ENCODE measurements at regions of chr3 and their contacts with region 1.

Region 1: GRCh38 chr3:129160891-129161859 is at the start of gene ISY1:
- DNase-seq: peak; percentile 96
- H3K4me3 Mint-ChIP-seq: peak within 1 kb of the TSS; percentile 98
- H3K27ac Mint-ChIP-seq: peak within 1 kb of the TSS; percentile 98
- H3K4me1 Mint-ChIP-seq: peaks cover 31% of the 10 kb centered on the region
- H3K27me3 Mint-ChIP-seq: peaks cover 3% of the 10 kb centered on the region
- total RNA-seq, gene ISY1: 73.8 and 83.7 TPM in 2 replicates

Region 2: DNA sequence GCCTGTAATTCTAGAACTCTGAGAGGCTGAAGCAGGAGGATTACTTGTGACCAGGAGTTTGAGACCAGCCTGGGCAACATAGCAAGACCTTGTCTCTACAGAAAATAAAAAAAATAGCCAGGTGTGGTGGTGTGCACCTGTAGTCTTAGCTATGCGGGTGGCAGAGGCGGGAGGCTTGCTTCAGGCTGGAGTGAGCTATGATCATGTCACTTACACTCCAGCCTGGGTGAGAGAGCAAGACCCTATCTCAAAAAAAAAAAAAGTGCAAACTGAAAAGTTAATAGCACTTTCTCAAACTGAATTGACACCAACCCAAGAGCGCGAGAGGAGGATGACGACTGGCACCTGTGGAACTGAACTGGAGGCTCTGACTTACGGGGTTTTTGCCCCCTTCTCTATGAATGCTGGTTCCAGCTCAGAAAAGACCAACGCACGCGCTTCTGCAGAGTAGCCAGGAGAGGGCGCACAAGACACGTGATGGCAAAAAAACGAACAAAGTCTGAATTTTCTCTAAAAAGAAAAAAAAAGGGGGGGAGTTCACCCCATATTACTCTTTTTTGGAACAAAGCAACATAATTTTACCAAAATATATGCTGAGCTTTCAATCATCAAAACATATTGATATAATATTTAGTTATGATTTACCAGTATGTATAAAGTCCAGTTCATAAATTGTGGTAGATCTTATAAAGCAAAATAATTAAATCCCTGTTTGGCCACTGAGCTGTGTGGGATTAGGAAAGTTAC is 191.0 kb before region 1 on chr3:
- intact Hi-C with region 1: loop called (anchors 1 kb)
- DNase-seq: peak; percentile 90
- H3K4me3 Mint-ChIP-seq: no peak overlapping the region
- H3K27ac Mint-ChIP-seq: no peak overlapping the region
- H3K4me1 Mint-ChIP-seq: peaks cover 6% of the 10 kb centered on the region
- H3K27me3 Mint-ChIP-seq: peaks cover 5% of the 10 kb centered on the region

Region 3: DNA sequence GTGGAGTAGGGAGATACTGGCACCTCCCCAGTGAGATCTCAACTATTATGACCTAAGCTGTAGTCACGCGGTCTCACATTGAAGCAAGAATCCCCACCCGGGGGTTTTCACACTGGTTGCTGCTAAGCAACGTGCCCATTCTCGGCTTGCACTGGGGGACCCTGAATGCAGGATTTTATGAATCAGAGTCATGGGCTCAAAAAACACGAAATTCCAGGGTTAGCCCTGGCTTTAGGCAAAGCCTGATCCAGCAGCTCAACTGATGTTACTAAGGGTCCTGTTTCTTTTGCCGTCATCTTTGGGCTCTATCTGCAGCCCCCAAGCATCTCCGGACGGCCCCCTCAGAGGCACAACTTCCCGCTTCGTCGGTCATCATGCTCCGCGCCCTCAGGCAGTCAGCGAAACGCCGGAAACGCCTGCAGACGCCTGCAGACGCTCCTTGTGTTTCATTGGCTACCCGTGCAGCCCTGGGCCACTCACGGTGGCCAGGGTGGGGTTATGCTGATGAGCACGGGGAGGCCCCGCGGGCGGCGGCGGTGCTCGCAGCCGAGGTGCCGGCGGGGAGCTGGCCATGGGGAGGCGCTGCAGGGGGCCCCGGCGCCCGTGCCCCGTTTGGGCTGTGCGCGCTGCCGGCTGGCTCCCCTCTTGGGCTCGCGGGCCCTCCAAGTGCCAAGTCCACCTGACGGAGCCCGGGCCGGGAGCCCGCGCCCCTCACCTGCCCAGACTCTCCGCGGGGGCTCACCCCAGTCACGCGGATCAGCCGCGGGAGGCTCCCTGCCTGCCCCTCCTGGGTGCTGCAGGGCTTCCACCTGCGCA is 134.2 kb before region 1 on chr3:
- intact Hi-C with region 1: loop called (anchors 1 kb)
- DNase-seq: peak; percentile 98
- H3K4me3 Mint-ChIP-seq: peak overlapping the region; percentile 84
- H3K27ac Mint-ChIP-seq: peak overlapping the region; percentile 92
- H3K4me1 Mint-ChIP-seq: peaks cover 11% of the 10 kb centered on the region
- H3K27me3 Mint-ChIP-seq: peaks cover 9% of the 10 kb centered on the region

Region 4: GRCh38 chr3:129052675-129053074 is 108.5 kb before region 1 on chr3:
- intact Hi-C with region 1: loop called (anchors 1 kb)
- DNase-seq: no peak
- H3K4me3 Mint-ChIP-seq: no peak overlapping the region
- H3K27ac Mint-ChIP-seq: no peak overlapping the region
- H3K4me1 Mint-ChIP-seq: peaks cover 9% of the 10 kb centered on the region
- H3K27me3 Mint-ChIP-seq: peaks cover 14% of the 10 kb centered on the region

Region 5: GRCh38 chr3:129173206-129173605 is 12.0 kb after region 1 on chr3:
- intact Hi-C with region 1: loop called (anchors 1 kb)
- DNase-seq: no peak
- H3K4me3 Mint-ChIP-seq: no peak overlapping the region
- H3K27ac Mint-ChIP-seq: no peak overlapping the region
- H3K4me1 Mint-ChIP-seq: peaks cover 29% of the 10 kb centered on the region
- H3K27me3 Mint-ChIP-seq: no peaks in the 10 kb centered on the region

Region 6: DNA sequence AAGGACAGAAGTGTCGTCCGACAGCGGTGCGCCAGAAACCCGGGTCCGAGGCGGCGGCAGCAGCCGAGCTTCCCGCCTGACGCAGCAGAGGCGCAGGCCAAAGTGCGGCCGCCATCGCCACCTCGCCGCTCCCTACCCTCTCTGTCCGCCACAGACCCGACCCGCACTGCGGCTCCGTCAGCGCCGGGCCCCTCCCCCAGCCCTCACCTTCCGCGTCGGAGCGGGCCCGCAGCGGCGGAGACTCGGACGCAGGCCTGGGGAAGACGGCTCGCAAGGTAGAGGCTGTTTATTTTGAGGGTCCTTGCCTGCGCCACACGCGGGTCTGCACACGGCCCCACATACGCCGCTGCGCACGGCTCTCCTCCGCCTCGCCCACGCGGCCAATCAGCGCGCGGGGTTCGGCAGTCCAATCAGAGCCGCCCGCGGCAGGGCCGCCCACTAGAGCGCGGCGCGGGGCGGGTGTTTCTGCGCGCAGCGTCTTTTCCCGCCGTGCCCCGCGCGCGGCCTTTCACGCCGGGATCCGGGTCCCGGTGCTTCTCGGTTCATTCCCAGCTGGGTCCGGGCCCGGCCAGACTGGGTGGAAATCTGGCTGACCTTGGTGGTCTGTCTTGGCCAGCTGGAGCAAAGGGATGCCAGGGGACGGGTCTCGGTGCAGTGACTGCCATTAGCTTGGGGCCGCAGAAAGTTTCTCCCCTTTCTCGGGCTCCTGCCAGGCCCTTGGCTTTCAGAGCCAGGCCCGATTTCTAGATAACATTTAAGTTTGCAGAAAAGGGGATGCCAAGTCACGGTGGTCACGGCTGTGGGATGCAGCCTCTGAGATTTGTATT is 22.6 kb after region 1 on chr3 and contains the start of gene CNBP:
- intact Hi-C with region 1: loop called (anchors 1 kb)
- DNase-seq: peak; percentile 98
- H3K4me3 Mint-ChIP-seq: peak within 1 kb of the TSS; percentile 96
- H3K27ac Mint-ChIP-seq: peak within 1 kb of the TSS; percentile 99
- H3K4me1 Mint-ChIP-seq: peaks cover 33% of the 10 kb centered on the region
- H3K27me3 Mint-ChIP-seq: no peaks in the 10 kb centered on the region
- total RNA-seq, gene CNBP: 422 and 430 TPM in 2 replicates

Region 7: DNA sequence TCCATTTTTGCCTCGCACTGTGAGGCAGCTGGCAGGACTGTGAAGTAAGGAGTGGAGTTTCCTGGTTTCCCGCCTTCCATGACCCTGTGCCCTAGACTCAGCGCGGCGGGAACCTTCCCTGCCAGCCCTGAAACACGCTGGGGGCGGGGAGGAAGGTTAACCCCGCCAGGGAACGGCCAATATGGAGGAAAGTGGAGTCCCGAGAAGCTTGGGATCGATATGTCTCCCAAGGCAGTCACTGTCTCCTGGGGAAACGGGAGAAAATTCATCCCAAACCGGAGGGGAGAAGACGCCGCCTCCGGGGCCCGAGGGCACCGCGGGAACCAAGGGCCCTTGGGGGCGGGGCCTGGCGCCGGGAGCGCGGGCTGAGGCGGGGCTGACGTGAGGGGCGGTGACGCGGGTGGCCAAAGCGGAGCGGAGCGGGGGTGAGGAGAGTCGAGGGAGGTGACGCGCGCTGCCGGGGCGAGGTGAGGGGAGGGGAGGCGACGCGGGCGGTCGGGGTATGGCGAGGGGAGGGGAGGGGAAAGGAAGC is 117.3 kb after region 1 on chr3 and contains the start of gene HMCES:
- intact Hi-C with region 1: loop called (anchors 1 kb)
- DNase-seq: peak; percentile 99
- H3K4me3 Mint-ChIP-seq: peak within 1 kb of the TSS; percentile 99
- H3K27ac Mint-ChIP-seq: peak within 1 kb of the TSS; percentile 96
- H3K4me1 Mint-ChIP-seq: peaks cover 43% of the 10 kb centered on the region
- H3K27me3 Mint-ChIP-seq: no peaks in the 10 kb centered on the region
- total RNA-seq, gene HMCES: 58.3 and 62.6 TPM in 2 replicates

Measured in activated CD4-positive, alpha-beta T cell treated with anti-CD3 and anti-CD28 coated beads, Interleukin-2, amount 10 ng/mL, durations not matched to agents 24 days and 14 days (primary cell).